WTC11 (cell line): ENCODE measurements at regions of chr2 and their contacts with region 1.

Region 1: DNA sequence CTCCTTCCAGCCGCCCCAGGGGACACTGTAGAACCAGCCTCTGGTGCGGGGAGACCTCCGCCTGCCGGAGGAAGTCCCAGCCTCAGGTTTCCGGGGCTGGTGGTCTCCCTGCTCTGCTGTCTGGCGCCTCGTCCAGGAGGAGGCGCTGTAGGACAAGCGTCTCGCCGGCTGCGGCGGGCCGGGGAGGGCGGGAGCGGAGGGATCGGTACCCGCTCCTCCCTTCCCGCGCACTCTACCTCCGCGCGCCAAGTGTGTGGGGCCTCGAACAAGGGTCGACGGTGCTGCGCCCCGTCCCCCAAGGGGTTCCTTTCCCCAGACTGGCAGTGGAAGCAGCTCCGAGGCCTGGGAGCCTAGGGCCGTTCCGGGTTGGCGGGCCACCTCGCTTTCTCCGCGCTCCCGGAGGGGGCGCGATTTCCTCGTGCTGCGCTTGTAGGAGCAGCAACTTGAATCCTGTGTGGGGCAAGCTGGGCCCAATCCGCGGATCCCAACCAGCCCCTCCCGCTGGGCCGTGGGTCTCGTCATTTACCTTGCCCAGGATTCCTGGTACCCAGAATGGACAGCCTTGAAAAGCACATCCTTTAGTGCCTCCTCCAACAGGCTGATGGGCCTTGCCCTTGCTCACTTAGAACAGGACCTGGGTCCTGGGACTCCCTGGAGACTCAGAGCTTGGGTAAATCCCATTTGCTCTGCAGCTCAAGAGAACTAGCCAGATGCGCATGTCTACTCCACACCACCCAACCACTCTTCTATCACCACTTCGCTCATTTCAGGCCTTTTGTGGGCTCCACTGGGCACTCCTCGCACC is 10.6 kb upstream of the HOXD4 start:
- DNase-seq: peak; percentile 88
- ATAC-seq: peak; percentile 81
- H3K4me3 Mint-ChIP-seq: peak overlapping the region; percentile 62
- H3K27ac Mint-ChIP-seq: no peak overlapping the region
- H3K4me1 Mint-ChIP-seq: peaks cover 6% of the 10 kb centered on the region
- H3K27me3 Mint-ChIP-seq: peaks cover 98% of the 10 kb centered on the region
- CTCF ChIP-seq: peak; percentile 91

Region 2: GRCh38 chr2:176161819-176162626 is 21.3 kb after region 1 on chr2:
- CTCF ChIA-PET with region 1: interaction called, 11 read pairs
- POLR2A ChIA-PET with region 1: no interaction called
- DNase-seq: no peak
- ATAC-seq: no peak
- H3K4me3 Mint-ChIP-seq: no peak overlapping the region
- H3K27ac Mint-ChIP-seq: no peak overlapping the region
- H3K4me1 Mint-ChIP-seq: peaks cover 35% of the 10 kb centered on the region
- H3K27me3 Mint-ChIP-seq: peaks cover 100% of the 10 kb centered on the region
- CTCF ChIP-seq: no peak

Region 3: DNA sequence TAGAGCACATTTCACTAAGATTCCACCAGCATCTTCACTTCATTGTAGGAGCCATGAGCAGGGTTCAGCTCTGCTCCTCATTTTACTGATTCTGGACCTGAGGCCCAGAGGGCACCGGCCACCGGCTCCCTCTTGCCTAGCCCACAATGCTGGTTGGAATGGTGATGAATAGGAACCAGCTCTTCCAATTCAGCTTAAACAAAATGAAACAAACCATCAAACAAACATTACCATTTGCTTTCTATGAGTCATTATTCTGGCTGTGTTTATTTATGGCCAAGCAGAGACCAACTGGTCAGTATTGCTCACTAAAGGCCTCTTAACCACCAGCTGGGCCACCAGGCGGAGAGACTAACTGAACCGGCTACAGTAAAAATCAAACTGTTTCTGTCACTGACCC is 305.2 kb after region 1 on chr2:
- CTCF ChIA-PET with region 1: interaction called, 21 read pairs
- POLR2A ChIA-PET with region 1: no interaction called
- DNase-seq: no peak
- ATAC-seq: no peak
- H3K4me3 Mint-ChIP-seq: no peak overlapping the region
- H3K27ac Mint-ChIP-seq: no peak overlapping the region
- H3K4me1 Mint-ChIP-seq: peaks cover 29% of the 10 kb centered on the region
- H3K27me3 Mint-ChIP-seq: peaks cover 17% of the 10 kb centered on the region
- CTCF ChIP-seq: no peak

Region 4: DNA sequence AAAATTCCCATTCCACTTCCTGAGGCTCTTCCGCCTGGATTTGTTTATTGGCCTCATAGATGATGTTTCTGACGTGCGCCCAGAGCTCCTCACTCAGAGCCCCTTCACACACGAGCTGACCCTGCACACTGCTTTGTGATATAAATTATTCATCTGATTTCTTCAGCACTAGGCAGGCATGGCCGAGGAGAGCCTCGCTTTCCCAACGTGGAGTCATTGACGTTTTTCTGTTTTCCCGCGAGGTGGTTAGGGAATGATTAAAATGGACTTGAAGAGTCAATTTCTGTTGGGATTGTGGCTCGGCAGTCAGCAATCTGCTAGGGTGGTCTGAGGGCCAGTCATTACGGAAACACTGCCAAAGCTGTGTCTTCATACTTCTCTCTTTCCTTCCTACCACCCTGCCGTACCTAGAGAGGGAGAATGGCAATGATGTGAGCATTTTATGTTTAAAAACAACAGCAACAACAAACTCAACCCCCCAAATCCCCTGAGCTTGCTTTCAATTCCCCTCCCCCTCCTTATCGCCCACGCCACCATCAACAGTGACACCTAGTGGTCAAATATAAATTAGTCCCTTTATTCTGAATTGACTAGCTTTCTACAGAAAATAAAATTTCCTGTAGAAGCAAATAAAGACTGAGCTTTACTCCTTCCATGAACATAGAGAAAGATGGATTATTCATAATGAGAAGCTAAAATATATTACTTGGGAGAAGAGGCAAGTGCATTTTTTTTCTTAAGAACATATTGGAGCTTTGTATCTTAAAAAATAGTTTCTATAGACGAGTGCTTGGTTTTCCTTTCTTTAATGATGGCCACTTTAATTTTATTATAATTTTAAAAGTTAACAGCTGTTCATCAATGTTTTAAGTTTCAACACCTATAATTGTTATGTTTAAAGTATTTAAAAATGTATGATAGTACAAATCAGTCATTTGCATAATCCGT is 413.7 kb after region 1 on chr2:
- CTCF ChIA-PET with region 1: interaction called, 48 read pairs
- POLR2A ChIA-PET with region 1: no interaction called
- DNase-seq: no peak
- ATAC-seq: peak; percentile 35; the same call in 1 of the 2 replicates
- H3K4me3 Mint-ChIP-seq: peak overlapping the region; percentile 61
- H3K27ac Mint-ChIP-seq: no peak overlapping the region
- H3K4me1 Mint-ChIP-seq: peaks cover 22% of the 10 kb centered on the region
- H3K27me3 Mint-ChIP-seq: peaks cover 43% of the 10 kb centered on the region
- CTCF ChIP-seq: no peak; the same call in 1 of the 2 replicates

Region 5: DNA sequence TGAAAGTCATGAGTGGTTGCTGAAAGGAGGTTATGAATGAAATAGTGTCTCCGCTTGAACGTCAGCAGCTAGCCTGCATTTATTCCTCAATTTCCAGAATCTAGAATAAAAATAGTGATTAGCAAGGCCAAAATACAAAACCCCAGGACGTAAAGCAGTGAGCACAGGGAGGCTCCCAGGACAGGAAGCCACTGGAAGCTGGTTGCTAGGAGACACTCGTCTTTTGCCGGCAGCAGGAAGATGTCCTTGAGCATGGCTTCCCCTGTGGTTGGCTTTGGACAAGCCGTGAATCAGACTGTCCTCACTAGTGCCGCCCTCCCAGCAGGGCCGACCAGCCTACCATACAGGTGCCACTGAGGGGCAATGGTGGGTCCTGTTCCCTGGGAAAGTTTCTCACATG is 502.9 kb after region 1 on chr2:
- CTCF ChIA-PET with region 1: interaction called, 30 read pairs
- POLR2A ChIA-PET with region 1: no interaction called
- DNase-seq: peak; percentile 22
- ATAC-seq: peak; percentile 68
- H3K4me3 Mint-ChIP-seq: no peak overlapping the region
- H3K27ac Mint-ChIP-seq: no peak overlapping the region
- H3K4me1 Mint-ChIP-seq: peaks cover 44% of the 10 kb centered on the region
- H3K27me3 Mint-ChIP-seq: peaks cover 95% of the 10 kb centered on the region
- CTCF ChIP-seq: no peak